ENCODE measurements at regions of chr2 and their contacts with region 1.

Region 1: GRCh38 chr2:202033321-202034248 is at the start of gene FZD7:
- DNase-seq: peak; percentile 72 to 95
- H3K4me3 ChIP-seq: peak within 1 kb of the TSS; percentile 61 to 81
- H3K27ac ChIP-seq: peak within 1 kb of the TSS; percentile 95 to 96
- H3K4me1 ChIP-seq: peaks cover 0 to 15% of the 10 kb centered on the region in 2 donors
- H3K27me3 ChIP-seq: no peaks in the 10 kb centered on the region
- CTCF ChIP-seq: peak in 1 of 3 experiments; percentile 28
- total RNA-seq, gene FZD7: 32.5 TPM

Region 2: DNA sequence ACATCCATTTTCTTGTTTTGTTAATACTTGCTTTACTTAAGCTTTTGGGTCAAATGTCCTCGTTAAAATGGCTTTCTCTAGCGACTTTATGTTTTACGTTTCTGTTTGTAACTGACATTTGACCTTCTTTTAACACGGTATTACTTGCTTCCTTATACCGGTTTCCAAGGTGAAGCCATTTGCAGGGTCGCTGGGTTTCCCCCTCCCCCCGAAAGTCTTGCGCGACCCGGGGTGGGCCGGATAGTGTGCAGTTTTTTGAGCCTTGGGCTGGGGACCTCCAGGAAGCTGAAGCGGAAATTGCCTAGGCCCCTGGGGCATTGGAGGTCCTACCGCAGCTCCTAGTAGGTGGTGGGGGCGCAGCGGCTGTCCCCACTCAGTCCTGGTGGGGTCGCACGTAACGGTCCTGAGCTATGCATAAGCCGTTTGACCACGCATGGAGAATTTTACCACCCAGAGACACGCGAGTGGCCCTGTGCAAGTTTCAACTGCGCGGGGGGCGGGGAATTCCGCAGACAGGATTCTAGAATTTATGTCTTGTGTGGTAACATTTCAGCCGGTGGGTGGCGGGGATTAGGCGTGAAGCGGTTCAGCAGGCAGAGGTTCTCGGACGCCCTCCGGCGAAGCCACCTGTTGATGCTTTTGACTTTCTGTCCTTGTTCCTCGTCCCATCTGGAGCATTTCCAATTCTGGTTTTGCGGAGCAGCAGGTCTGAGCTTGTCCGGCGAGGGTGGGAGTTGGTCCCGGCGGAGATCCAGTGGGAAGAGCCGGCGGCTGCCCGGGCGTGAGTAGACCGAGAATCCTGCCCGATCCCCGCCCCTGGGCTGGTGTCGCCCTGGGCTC is 915.2 kb before region 1 on chr2:
- intact Hi-C with region 1: loop called (anchors 5 kb)
- DNase-seq: peak; percentile 55 to 91
- H3K4me3 ChIP-seq: peak overlapping the region; percentile 77 to 85
- H3K27ac ChIP-seq: peak overlapping the region; percentile 99
- H3K4me1 ChIP-seq: peaks cover 3 to 16% of the 10 kb centered on the region in 2 donors
- H3K27me3 ChIP-seq: no peaks in the 10 kb centered on the region
- CTCF ChIP-seq: peak in 2 of 3 experiments; percentile 3 to 53

Region 3: GRCh38 chr2:201780674-201781581 is 252.7 kb before region 1 on chr2 and contains the start of gene ALS2:
- intact Hi-C with region 1: loop called (anchors 2 kb)
- DNase-seq: peak; percentile 84 to 99
- H3K4me3 ChIP-seq: peak within 1 kb of the TSS; percentile 67 to 85
- H3K27ac ChIP-seq: peak within 1 kb of the TSS; percentile 84 to 92
- H3K4me1 ChIP-seq: peaks cover 0 to 7% of the 10 kb centered on the region in 2 donors
- H3K27me3 ChIP-seq: no peaks in the 10 kb centered on the region
- CTCF ChIP-seq: no peak
- total RNA-seq, gene ALS2: 6.5 TPM

Region 4: GRCh38 chr2:201860636-201861066 is 172.9 kb before region 1 on chr2:
- intact Hi-C with region 1: loop called (anchors 1 kb)
- DNase-seq: no peak
- H3K4me3 ChIP-seq: no peak overlapping the region
- H3K27ac ChIP-seq: no peak overlapping the region
- H3K4me1 ChIP-seq: no peaks in the 10 kb centered on the region
- H3K27me3 ChIP-seq: no peaks in the 10 kb centered on the region
- CTCF ChIP-seq: peak; percentile 65 to 81 (median 68)

Region 5: GRCh38 chr2:201890457-201890856 is 143.1 kb before region 1 on chr2:
- intact Hi-C with region 1: no loop called
- DNase-seq: no peak
- H3K4me3 ChIP-seq: no peak overlapping the region
- H3K27ac ChIP-seq: no peak overlapping the region
- H3K4me1 ChIP-seq: no peaks in the 10 kb centered on the region
- H3K27me3 ChIP-seq: no peaks in the 10 kb centered on the region
- CTCF ChIP-seq: no peak

Region 6: DNA sequence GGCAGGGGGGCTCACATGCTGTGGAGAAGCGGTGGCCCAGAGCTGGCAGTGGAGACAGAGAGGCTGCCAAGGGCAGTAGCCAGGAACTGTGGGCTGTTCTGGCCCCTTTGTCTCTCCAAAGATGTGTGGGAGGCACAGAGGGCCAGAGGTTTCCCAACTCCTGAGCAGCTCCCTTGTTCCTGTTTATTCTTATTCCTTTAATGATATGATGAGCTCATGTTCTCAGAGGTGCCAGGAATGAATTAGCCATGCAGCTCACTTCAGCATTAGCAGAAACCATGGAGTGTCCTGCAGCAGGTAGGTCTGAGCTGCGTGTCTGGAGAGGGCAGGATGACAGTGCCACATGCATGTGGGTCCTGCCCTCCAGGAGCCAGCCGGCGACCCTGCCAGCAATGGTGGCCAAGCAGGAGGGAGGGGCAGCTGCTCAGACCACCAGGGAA is 77.9 kb before region 1 on chr2:
- intact Hi-C with region 1: no loop called
- DNase-seq: no peak
- H3K4me3 ChIP-seq: no peak overlapping the region
- H3K27ac ChIP-seq: peak overlapping the region in 1 of 2 donors; percentile 4
- H3K4me1 ChIP-seq: no peaks in the 10 kb centered on the region
- H3K27me3 ChIP-seq: no peaks in the 10 kb centered on the region
- CTCF ChIP-seq: no peak

Region 7: DNA sequence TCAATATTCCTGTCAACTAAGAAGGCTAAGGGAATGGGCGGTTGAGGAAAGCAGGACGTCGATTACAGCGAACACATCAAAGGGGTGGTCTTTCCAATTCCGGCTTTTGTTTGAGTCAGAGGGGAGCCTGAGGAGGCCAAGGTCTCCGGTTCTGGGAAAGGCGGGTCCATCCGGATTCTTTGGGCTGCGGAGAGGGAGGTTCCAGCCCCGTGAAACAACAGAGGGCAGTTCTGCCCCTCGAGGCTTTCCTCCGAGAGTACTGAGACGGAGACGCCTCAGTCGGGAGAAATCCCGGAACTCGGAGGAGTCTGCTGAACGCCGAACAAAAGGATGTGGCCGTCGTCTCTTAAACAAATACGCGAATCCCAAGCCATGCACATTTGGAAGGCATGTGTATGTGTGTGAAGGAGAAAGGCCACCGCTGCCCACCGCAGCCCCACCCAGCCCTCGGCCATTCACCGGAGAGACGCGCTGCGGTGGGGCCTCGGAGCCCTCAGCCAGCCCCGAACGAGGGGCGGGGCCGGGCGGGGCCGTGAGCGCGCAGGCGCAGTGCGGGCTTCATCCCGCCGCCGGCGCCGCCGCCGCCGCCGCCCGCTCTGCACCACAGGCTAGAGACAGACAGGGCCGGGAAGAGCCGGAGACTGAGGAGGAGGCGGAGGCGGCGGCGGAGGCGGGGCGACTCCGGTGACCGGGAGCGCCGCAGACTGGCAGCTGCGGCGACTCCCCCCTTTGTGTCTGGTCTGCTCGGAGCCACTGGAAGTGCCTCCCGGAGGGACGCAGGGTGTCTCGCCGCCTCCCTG is 342.2 kb after region 1 on chr2 and contains the start of gene BMPR2:
- intact Hi-C with region 1: loop called (anchors 10 kb)
- DNase-seq: peak; percentile 75 to 93
- H3K4me3 ChIP-seq: peak within 1 kb of the TSS; percentile 97 to 98
- H3K27ac ChIP-seq: peak within 1 kb of the TSS; percentile 98 to 100
- H3K4me1 ChIP-seq: peaks cover 0 to 8% of the 10 kb centered on the region in 2 donors
- H3K27me3 ChIP-seq: no peaks in the 10 kb centered on the region
- CTCF ChIP-seq: no peak
- total RNA-seq, gene BMPR2: 47.8 TPM

Region 8: DNA sequence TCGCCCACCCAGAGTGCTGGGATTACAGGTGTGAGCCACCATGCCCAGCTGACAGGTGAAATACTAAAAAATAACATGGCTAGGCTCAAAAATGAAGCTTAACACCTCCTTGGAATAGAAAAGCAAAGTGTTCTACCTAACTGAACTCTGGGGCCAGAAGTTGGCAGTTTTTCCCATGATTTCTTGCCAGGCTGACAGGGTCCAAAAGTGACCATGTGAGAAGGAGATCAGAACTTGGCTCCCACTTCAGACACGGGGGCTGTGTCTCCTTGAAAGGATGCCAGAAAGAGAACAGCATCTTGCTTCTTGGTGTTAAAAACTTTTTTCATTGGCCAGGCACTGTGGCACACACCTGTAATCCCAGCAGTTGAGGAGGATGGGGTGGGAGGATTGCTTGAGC is 389.6 kb after region 1 on chr2:
- intact Hi-C with region 1: no loop called
- DNase-seq: no peak
- H3K4me3 ChIP-seq: no peak overlapping the region
- H3K27ac ChIP-seq: no peak overlapping the region
- H3K4me1 ChIP-seq: peaks cover 0 to 17% of the 10 kb centered on the region in 2 donors
- H3K27me3 ChIP-seq: no peaks in the 10 kb centered on the region
- CTCF ChIP-seq: no peak